Activated T-helper 2 cell treated with anti-CD3 and anti-CD28 coated beads, Interferon-gamma antibody, Interleukin-2, Interleukin-4, amounts not matched to agents 10 μg/mL and 5 μg/mL and 100 μg/mL, durations not matched to agents 14 hours and 24 hours and 36 hours (primary cell): ENCODE measurements at regions of chr11 and their contacts with region 1.

Region 1: GRCh38 chr11:96235751-96236150 is 107.2 kb downstream of the MAML2 start:
- DNase-seq: peak; percentile 52
- H3K4me3 Mint-ChIP-seq: peak overlapping the region; percentile 65
- H3K27ac Mint-ChIP-seq: peak overlapping the region; percentile 89
- H3K4me1 Mint-ChIP-seq: peaks cover 36% of the 10 kb centered on the region
- H3K27me3 Mint-ChIP-seq: no peaks in the 10 kb centered on the region

Region 2: DNA sequence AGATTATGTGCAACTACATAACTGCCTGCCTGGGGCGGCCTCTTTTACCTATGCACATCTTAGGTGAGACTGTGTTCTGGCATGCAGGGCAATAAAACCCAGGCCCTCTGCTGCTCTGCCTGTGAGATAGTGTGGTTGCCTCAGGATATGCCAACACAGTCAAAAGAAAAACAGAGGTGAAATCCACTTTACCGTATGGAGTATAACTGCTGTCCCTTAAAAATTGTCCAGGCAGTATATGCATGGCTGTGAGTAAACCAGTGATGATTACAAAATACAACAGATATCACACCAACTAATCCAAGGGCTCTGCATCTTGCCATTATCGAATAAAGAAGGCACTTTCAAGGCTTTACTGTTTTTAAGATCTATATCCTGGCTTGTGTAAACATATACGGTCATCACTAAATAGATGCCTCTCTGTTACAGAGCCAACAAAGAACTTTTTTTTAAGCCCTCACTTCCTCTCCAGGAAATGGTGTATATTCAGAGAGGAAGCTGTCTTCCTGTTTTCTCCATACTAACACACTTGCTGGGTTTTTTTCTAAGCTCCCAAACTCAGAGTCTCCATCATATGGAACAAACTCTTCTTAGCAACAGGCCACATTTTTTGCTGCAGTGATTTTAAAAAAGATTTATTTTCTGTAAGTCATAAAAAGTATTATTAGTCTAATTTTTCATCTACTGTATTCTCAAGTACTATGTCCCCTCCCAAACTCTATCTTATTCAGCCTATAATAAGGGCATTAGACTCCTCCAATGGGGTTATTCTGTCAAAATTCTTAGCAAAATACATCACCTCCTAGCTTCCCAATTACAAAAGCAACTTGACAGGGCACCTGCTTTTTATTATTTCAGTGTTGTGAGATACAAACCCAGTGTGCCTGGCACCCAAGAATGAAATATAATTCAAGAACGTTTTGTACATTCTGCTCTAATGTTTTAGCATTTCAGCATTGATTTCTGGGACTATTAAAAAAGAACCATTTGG is 28.0 kb before region 1 on chr11:
- intact Hi-C with region 1: loop called (anchors 1 kb)
- DNase-seq: no peak
- H3K4me3 Mint-ChIP-seq: peak overlapping the region; percentile 48
- H3K27ac Mint-ChIP-seq: peak overlapping the region; percentile 85
- H3K4me1 Mint-ChIP-seq: peaks cover 76% of the 10 kb centered on the region
- H3K27me3 Mint-ChIP-seq: no peaks in the 10 kb centered on the region

Region 3: DNA sequence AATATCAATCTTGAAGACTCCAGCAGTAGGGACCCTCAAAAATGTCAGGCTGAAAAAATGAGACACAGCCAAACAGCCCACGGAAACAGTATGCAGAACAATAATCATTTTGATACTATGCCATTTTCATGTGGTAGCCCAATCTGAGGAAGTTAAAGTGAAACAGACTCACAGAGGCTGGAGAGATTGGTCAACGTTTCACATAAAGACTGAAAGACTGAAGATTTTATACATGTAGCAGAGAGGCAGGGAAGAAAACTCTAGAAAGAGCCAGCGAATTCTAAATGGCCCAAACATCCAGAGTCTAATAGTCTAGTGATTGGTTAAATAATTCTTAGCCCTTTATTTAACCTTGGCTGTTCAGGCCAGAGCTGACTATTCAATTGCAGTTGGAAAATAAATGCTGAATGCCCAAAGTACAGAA is 57.9 kb after region 1 on chr11:
- intact Hi-C with region 1: loop called (anchors 5 kb)
- DNase-seq: no peak
- H3K4me3 Mint-ChIP-seq: peak overlapping the region; percentile 19
- H3K27ac Mint-ChIP-seq: peak overlapping the region; percentile 73
- H3K4me1 Mint-ChIP-seq: peaks cover 47% of the 10 kb centered on the region
- H3K27me3 Mint-ChIP-seq: no peaks in the 10 kb centered on the region

Region 4: DNA sequence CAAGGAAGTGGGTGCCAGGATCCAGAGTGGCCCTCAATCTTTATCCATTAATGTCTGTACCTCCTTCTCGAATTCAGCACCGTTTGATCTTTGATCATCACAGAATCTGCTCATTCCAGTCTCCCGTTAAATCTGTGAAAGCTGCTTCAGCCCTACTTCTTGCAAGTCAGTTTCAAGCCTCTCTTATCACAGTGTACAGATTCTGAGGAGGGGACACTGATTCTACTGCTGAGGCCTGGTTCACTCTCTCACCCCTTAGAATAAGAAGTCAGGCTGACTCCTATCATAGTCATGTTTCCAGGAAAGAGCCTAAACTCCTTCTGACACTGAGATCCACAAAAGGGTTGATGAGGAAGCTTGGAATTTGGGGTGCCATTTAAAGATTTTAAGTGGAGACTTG is 68.2 kb after region 1 on chr11:
- intact Hi-C with region 1: no loop called
- DNase-seq: no peak
- H3K4me3 Mint-ChIP-seq: no peak overlapping the region
- H3K27ac Mint-ChIP-seq: no peak overlapping the region
- H3K4me1 Mint-ChIP-seq: peaks cover 50% of the 10 kb centered on the region
- H3K27me3 Mint-ChIP-seq: no peaks in the 10 kb centered on the region

Region 5: DNA sequence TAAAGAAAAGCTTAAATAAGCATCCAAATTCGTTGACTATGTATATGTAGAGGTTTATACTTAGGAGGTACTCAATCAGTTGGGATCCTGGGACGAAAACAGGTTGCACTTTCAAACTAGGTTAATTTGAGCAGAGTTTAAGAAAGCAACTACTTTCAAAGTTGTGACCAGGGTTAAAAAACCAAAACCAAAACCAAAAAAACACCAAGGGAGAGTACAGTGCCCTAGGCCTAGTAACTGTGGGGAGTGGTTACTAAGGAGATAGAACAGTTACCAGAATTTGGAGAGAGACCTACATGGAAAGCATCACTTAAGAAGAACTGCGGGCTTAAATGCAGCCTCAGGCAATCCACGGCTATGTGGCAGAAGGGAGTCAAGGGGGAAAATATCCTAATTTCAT is 302.4 kb after region 1 on chr11:
- intact Hi-C with region 1: no loop called
- DNase-seq: no peak
- H3K4me3 Mint-ChIP-seq: no peak overlapping the region
- H3K27ac Mint-ChIP-seq: no peak overlapping the region
- H3K4me1 Mint-ChIP-seq: no peaks in the 10 kb centered on the region
- H3K27me3 Mint-ChIP-seq: no peaks in the 10 kb centered on the region